Caco-2 (cell line): ENCODE measurements at regions of chr9 and their contacts with region 1.

Region 1: DNA sequence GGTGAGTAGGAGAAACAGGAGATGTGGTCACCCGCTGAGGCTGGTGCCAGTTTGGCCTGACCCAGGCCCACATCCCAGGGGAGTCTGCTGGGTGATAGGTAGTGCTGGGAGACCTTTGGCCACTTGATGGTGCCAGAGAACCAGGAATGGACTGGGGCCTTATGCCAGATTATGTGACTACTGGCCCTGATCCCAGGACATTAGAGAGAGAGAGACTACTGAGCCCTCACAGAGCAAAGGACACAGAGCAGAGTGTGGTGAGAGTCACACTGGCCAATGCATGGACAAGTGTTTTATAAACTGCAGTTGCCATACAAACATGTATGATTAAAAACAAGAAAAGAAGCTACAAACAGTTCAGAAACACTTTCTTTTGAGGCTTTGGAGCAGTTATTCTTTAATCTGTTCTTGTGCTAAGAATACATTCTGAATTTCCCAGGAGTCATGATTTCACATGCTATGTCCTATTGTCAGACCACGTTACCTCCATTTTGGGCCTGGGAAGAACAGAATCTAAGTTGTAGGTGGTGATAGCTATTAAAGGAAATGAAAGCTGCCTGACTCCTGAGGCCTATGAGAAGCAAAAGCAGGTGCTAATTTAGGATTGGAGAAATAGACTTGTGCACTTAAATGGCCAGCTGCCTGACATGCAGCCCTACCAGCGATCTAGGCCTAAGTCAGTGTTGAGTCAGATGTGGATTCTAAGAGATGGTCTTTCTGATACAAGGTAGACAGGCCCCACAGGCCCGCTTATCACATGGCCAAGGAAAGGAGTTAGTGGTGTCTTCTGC is 32.6 kb upstream of the TMOD1 start:
- DNase-seq: peak; percentile 59 to 72
- H3K4me3 ChIP-seq: no peak overlapping the region
- H3K4me3 Mint-ChIP-seq: no peak overlapping the region
- H3K27ac Mint-ChIP-seq: no peak overlapping the region
- H3K4me1 ChIP-seq: no peaks in the 10 kb centered on the region
- H3K4me1 Mint-ChIP-seq: no peaks in the 10 kb centered on the region
- H3K27me3 ChIP-seq: no peaks in the 10 kb centered on the region
- H3K27me3 Mint-ChIP-seq: no peaks in the 10 kb centered on the region
- CTCF ChIP-seq: peak; percentile 67 to 81

Region 2: GRCh38 chr9:97411789-97412625 is 56.8 kb before region 1 on chr9 and contains the start of gene TDRD7:
- CTCF ChIA-PET with region 1: no interaction called
- POLR2A ChIA-PET with region 1: no interaction called
- intact Hi-C with region 1: no loop called
- DNase-seq: peak; percentile 86 to 90
- H3K4me3 ChIP-seq: peak within 1 kb of the TSS; percentile 75
- H3K4me3 Mint-ChIP-seq: peak within 1 kb of the TSS; percentile 77
- H3K27ac Mint-ChIP-seq: peak within 1 kb of the TSS; percentile 89
- H3K4me1 ChIP-seq: peaks cover 14% of the 10 kb centered on the region
- H3K4me1 Mint-ChIP-seq: peaks cover 37% of the 10 kb centered on the region
- H3K27me3 ChIP-seq: no peaks in the 10 kb centered on the region
- H3K27me3 Mint-ChIP-seq: no peaks in the 10 kb centered on the region
- CTCF ChIP-seq: peak; percentile 95 to 99
- total RNA-seq, gene TDRD7: 22.0 and 23.0 TPM in 2 replicates

Region 3: GRCh38 chr9:97615439-97616072 is 146.7 kb after region 1 on chr9:
- CTCF ChIA-PET with region 1: interaction called, 16 read pairs
- POLR2A ChIA-PET with region 1: no interaction called
- intact Hi-C with region 1: loop called (anchors 1 kb)
- DNase-seq: peak; percentile 57 to 68
- H3K4me3 ChIP-seq: no peak overlapping the region
- H3K4me3 Mint-ChIP-seq: no peak overlapping the region
- H3K27ac Mint-ChIP-seq: no peak overlapping the region
- H3K4me1 ChIP-seq: no peaks in the 10 kb centered on the region
- H3K4me1 Mint-ChIP-seq: no peaks in the 10 kb centered on the region
- H3K27me3 ChIP-seq: no peaks in the 10 kb centered on the region
- H3K27me3 Mint-ChIP-seq: no peaks in the 10 kb centered on the region
- CTCF ChIP-seq: peak; percentile 74 to 79

Region 4: GRCh38 chr9:97985058-97985861 is 516.4 kb after region 1 on chr9:
- CTCF ChIA-PET with region 1: no interaction called
- POLR2A ChIA-PET with region 1: no interaction called
- intact Hi-C with region 1: no loop called
- DNase-seq: peak; percentile 54 to 57
- H3K4me3 ChIP-seq: peak overlapping the region; percentile 96
- H3K4me3 Mint-ChIP-seq: peak overlapping the region; percentile 79
- H3K27ac Mint-ChIP-seq: peak overlapping the region; percentile 92
- H3K4me1 ChIP-seq: peaks cover 19% of the 10 kb centered on the region
- H3K4me1 Mint-ChIP-seq: peaks cover 48% of the 10 kb centered on the region
- H3K27me3 ChIP-seq: no peaks in the 10 kb centered on the region
- H3K27me3 Mint-ChIP-seq: no peaks in the 10 kb centered on the region
- CTCF ChIP-seq: no peak